AG04449 (cell line): ENCODE measurements at regions of chr15 and their contacts with region 1.

Region 1: DNA sequence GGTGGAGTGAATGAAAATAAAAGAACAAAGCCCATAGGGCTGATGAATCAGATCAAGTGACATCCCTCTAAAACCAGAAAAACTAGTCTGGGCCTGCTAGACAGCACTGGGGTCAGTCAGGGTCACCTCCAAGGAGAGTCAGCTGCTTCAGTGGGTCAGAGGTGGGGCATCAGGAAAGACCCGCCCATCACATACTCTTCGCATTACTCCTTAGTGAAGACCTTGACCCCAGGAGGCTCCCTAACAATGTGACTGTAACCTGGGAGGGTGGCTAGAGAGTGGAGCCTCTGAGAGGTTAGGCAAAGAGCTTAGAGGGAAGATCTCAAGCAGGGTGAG is 12.9 kb downstream of the PPCDC start:
- DNase-seq: no peak
- H3K4me3 ChIP-seq: no peak overlapping the region
- CTCF ChIP-seq: no peak

Region 2: GRCh38 chr15:75023181-75023871 is 13.0 kb before region 1 on chr15 and contains the start of gene PPCDC:
- CTCF ChIA-PET with region 1: interaction called, 19 read pairs
- POLR2A ChIA-PET with region 1: no interaction called
- DNase-seq: peak; percentile 41
- H3K4me3 ChIP-seq: peak within 1 kb of the TSS; percentile 99
- CTCF ChIP-seq: no peak

Region 3: DNA sequence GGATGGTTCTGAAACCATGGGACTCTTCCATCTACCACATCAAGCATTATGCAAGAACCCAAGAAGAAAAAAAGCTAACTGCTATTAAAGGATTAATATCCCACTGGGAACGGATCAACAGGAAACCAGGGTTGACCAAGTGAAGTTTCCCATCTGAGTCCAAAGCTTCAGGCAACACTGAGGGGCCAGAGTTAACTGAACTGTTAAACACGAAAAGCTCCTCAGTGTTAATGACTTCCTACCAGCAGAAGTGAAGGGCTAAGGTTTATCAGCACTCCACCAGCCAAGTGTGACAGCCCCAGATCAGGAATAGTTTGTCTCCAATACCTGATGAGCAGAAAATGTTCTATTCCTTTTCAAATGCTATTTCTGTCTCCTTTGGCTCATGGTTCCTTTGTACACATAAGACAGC is 506.1 kb after region 1 on chr15:
- CTCF ChIA-PET with region 1: no interaction called
- POLR2A ChIA-PET with region 1: no interaction called
- DNase-seq: no peak
- H3K4me3 ChIP-seq: no peak overlapping the region
- CTCF ChIP-seq: no peak